ENCODE measurements at regions of chr6 and their contacts with region 1.

Region 1: DNA sequence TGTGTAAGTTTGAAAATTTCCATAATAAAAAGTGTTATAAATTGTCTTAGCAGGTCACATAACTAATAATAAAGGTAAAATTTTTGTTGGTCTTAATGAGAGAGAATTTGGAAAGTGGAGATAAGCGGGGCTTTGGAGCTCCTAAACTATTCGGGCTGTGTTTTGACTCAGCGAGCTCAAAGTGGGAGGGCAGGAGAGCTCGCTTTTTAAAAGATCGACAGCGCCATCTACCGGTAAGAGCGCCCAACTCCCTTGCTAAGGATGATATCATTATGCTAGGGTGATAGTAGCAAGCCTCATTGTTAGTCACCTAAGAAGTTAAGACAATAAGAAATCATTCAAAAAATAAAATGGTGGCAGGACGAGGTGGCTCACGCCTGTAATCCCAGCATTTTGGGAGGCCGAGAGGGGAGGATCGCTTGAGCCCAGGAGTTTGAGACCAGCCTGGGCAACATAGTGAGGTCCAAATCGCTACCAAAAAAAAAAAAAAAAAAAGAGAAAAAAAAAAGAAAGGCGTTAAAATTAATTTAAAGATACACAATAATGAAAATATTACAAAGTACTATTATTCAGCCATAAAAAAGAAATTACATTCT is 24.8 kb downstream of the C6orf15 start:
- DNase-seq: peak; percentile 76 to 91 (median 84)
- H3K4me3 ChIP-seq: no peak overlapping the region
- H3K27ac ChIP-seq: no peak overlapping the region
- H3K27me3 ChIP-seq: no peaks in the 10 kb centered on the region
- CTCF ChIP-seq: peak; percentile 54 to 96 (median 83)

Region 2: GRCh38 chr6:30678964-30679726 is 408.4 kb before region 1 on chr6:
- intact Hi-C with region 1: loop called in 1 of 2 experiments (anchors 5 kb)
- DNase-seq: peak; percentile 78 to 92 (median 84)
- H3K4me3 ChIP-seq: peak overlapping the region in 49 of 59 donors; percentile 8 to 81 (median 35)
- H3K27ac ChIP-seq: peak overlapping the region in 23 of 59 donors; percentile 1 to 87 (median 38)
- H3K27me3 ChIP-seq: no peaks in the 10 kb centered on the region
- CTCF ChIP-seq: peak; percentile 88 to 99 (median 96)

Region 3: GRCh38 chr6:30793521-30794194 is 293.9 kb before region 1 on chr6:
- intact Hi-C with region 1: no loop called
- DNase-seq: no peak
- H3K4me3 ChIP-seq: no peak overlapping the region
- H3K27ac ChIP-seq: peak overlapping the region in 42 of 59 donors; percentile 2 to 82 (median 54)
- H3K27me3 ChIP-seq: no peaks in the 10 kb centered on the region
- CTCF ChIP-seq: no peak

Region 4: GRCh38 chr6:30828027-30828960 is 259.3 kb before region 1 on chr6:
- intact Hi-C with region 1: loop called (anchors 2 to 5 kb)
- DNase-seq: peak; percentile 80 to 91 (median 87)
- H3K4me3 ChIP-seq: peak overlapping the region in 18 of 59 donors; percentile 4 to 50 (median 19)
- H3K27ac ChIP-seq: peak overlapping the region in 50 of 59 donors; percentile 3 to 86 (median 64)
- H3K27me3 ChIP-seq: no peaks in the 10 kb centered on the region
- CTCF ChIP-seq: peak; percentile 75 to 99 (median 96)